PC-3 (cell line): ENCODE measurements at regions of chr2 and their contacts with region 1.

Region 1: GRCh38 chr2:667332-667999 is 9.7 kb downstream of the TMEM18 start:
- DNase-seq: peak; percentile 86
- ATAC-seq: peak; percentile 87
- H3K4me3 ChIP-seq: no peak overlapping the region
- H3K27ac ChIP-seq: no peak overlapping the region
- H3K4me1 ChIP-seq: peaks cover 13% of the 10 kb centered on the region; the same call in 1 of the 2 replicates
- H3K27me3 ChIP-seq: no peaks in the 10 kb centered on the region
- CTCF ChIP-seq: peak; percentile 75

Region 2: GRCh38 chr2:529425-529824 is 138.0 kb before region 1 on chr2:
- CTCF ChIA-PET with region 1: interaction called, 4 read pairs
- POLR2A ChIA-PET with region 1: no interaction called
- intact Hi-C with region 1: loop called (anchors 1 kb)
- DNase-seq: peak; percentile 77
- ATAC-seq: peak; percentile 60
- H3K4me3 ChIP-seq: no peak overlapping the region
- H3K27ac ChIP-seq: no peak overlapping the region
- H3K4me1 ChIP-seq: 0 out of 2 replicates have a peak, but pooled peaks cover 3% of the 10 kb centered on the region
- H3K27me3 ChIP-seq: no peaks in the 10 kb centered on the region
- CTCF ChIP-seq: peak; percentile 67

Region 3: GRCh38 chr2:1125633-1126370 is 458.3 kb after region 1 on chr2:
- CTCF ChIA-PET with region 1: no interaction called
- POLR2A ChIA-PET with region 1: no interaction called
- intact Hi-C with region 1: no loop called
- DNase-seq: no peak
- ATAC-seq: no peak
- H3K4me3 ChIP-seq: no peak overlapping the region
- H3K27ac ChIP-seq: no peak overlapping the region
- H3K4me1 ChIP-seq: no peaks in the 10 kb centered on the region
- H3K27me3 ChIP-seq: peaks cover 29% of the 10 kb centered on the region
- CTCF ChIP-seq: no peak